ENCODE measurements at regions of chr14 and their contacts with region 1.

Region 1: GRCh38 chr14:60331201-60332045 is 82.4 kb downstream of the PPM1A start:
- DNase-seq: peak; percentile 51 to 86 (median 80)
- ATAC-seq: peak; percentile 80
- H3K4me3 ChIP-seq: peak overlapping the region; percentile 52 to 55
- H3K4me3 Mint-ChIP-seq: peak overlapping the region; percentile 98
- H3K27ac ChIP-seq: peak overlapping the region; percentile 36 to 47
- H3K27ac Mint-ChIP-seq: peak overlapping the region; percentile 94
- H3K4me1 ChIP-seq: peaks cover 9% of the 10 kb centered on the region
- H3K4me1 Mint-ChIP-seq: peaks cover 33% of the 10 kb centered on the region
- H3K27me3 ChIP-seq: no peaks in the 10 kb centered on the region
- H3K27me3 Mint-ChIP-seq: peaks cover 30% of the 10 kb centered on the region
- CTCF ChIP-seq: peak; percentile 87

Region 2: GRCh38 chr14:59483900-59484638 is 847.4 kb before region 1 on chr14 and contains the starts of genes JKAMP and L3HYPDH:
- CTCF ChIA-PET with region 1: no interaction called
- POLR2A ChIA-PET with region 1: no interaction called
- intact Hi-C with region 1: loop called in 1 of 2 experiments (anchors 5 kb)
- DNase-seq: peak; percentile 93 to 99 (median 97)
- ATAC-seq: peak; percentile 95
- H3K4me3 ChIP-seq: peak within 1 kb of the TSS; percentile 94 to 99
- H3K4me3 Mint-ChIP-seq: peak within 1 kb of the TSS; percentile 96
- H3K27ac ChIP-seq: peak within 1 kb of the TSS; percentile 77 to 89
- H3K27ac Mint-ChIP-seq: peak within 1 kb of the TSS; percentile 88
- H3K4me1 ChIP-seq: peaks cover 46% of the 10 kb centered on the region
- H3K4me1 Mint-ChIP-seq: peaks cover 76% of the 10 kb centered on the region
- H3K27me3 ChIP-seq: no peaks in the 10 kb centered on the region
- H3K27me3 Mint-ChIP-seq: no peaks in the 10 kb centered on the region
- CTCF ChIP-seq: no peak
- total RNA-seq, gene JKAMP: 9.1 to 10.5 TPM
- total RNA-seq, gene L3HYPDH: 8.4 to 8.7 TPM

Region 3: DNA sequence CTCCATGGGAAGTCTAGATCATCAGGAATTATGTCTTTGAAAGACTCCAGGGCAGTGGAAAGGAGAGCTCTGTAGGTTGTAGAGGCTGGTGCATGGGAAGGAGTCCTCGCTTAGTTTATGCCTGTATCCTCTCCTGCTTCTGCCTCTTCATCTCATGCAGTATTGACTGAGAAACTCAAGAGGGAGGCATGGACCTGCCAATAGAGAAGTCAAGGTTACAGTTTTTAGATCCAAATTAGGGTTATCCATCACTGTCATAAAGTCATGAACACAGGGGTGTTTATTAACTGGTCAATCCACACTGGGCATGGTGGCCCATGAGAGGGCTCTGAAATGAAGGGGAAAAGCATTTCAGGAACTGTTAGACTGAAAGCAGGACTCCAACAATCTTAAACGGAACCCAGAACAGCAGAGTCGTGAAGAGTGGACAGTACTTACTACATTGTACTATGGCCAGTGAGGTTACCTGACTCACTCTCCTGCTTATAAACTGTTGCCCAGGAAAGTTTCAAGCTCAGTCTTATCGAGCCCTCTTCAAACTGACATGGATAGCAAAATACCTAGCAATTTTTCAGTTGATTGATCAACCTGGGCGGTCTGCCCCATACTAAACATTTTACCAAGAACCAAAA is 136.1 kb before region 1 on chr14:
- CTCF ChIA-PET with region 1: interaction called, 3 read pairs
- POLR2A ChIA-PET with region 1: no interaction called
- intact Hi-C with region 1: loop called (anchors 1 to 5 kb)
- DNase-seq: peak in 2 of 9 experiments; percentile 13 to 33
- ATAC-seq: peak; percentile 52
- H3K4me3 ChIP-seq: no peak overlapping the region
- H3K4me3 Mint-ChIP-seq: no peak overlapping the region
- H3K27ac ChIP-seq: no peak overlapping the region
- H3K27ac Mint-ChIP-seq: no peak overlapping the region
- H3K4me1 ChIP-seq: no peaks in the 10 kb centered on the region
- H3K4me1 Mint-ChIP-seq: no peaks in the 10 kb centered on the region
- H3K27me3 ChIP-seq: peaks cover 0 to 3% of the 10 kb centered on the region in 2 experiments
- H3K27me3 Mint-ChIP-seq: peaks cover 5% of the 10 kb centered on the region
- CTCF ChIP-seq: no peak

Region 4: DNA sequence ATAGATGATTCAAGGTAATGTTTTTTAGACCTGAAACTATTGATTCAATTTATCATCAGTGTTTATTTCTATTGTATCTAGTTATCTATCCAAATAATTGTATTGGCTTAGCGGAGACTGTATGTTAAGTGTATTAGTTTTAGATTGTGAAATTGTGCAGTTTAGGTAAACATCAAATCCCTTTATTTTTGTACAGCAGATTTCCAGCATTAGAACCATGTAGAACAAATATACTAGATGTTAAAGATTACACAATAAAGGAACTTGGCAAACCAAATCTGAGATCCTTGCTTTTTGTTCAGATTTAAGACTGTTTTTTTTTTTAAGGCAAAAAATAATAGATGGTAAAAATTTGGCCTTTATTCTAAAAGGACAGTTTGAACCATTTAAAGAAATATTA is 43.1 kb before region 1 on chr14:
- CTCF ChIA-PET with region 1: interaction called, 4 read pairs
- POLR2A ChIA-PET with region 1: no interaction called
- intact Hi-C with region 1: loop called in 1 of 2 experiments (anchors 5 kb)
- DNase-seq: no peak
- ATAC-seq: no peak
- H3K4me3 ChIP-seq: no peak overlapping the region
- H3K4me3 Mint-ChIP-seq: no peak overlapping the region
- H3K27ac ChIP-seq: no peak overlapping the region
- H3K27ac Mint-ChIP-seq: no peak overlapping the region
- H3K4me1 ChIP-seq: no peaks in the 10 kb centered on the region
- H3K4me1 Mint-ChIP-seq: no peaks in the 10 kb centered on the region
- H3K27me3 ChIP-seq: no peaks in the 10 kb centered on the region
- H3K27me3 Mint-ChIP-seq: no peaks in the 10 kb centered on the region
- CTCF ChIP-seq: no peak

Region 5: DNA sequence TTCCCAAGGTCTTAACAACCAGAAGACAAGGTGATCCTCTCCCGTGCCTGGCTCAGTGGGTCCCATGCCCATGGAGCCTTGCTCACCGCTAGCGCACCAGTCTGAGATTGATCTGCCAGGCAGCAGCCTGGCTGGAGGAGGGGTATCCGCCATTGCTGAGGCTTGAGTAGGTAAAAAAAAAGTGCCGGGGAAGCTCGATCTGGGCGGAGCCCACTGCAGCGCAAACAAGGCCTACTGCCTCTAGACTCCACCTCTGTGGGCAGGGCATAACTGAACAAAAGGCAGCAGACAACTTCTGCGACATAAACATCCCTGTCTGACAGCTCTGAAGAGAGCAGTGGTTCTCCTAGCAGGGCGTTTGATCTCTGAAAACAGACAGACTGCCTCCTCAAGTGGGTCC is 50.5 kb after region 1 on chr14:
- CTCF ChIA-PET with region 1: no interaction called
- POLR2A ChIA-PET with region 1: no interaction called
- intact Hi-C with region 1: no loop called
- DNase-seq: no peak
- ATAC-seq: no peak
- H3K4me3 ChIP-seq: no peak overlapping the region
- H3K4me3 Mint-ChIP-seq: no peak overlapping the region
- H3K27ac ChIP-seq: no peak overlapping the region
- H3K27ac Mint-ChIP-seq: no peak overlapping the region
- H3K4me1 ChIP-seq: no peaks in the 10 kb centered on the region
- H3K4me1 Mint-ChIP-seq: no peaks in the 10 kb centered on the region
- H3K27me3 ChIP-seq: peaks cover 0 to 2% of the 10 kb centered on the region in 2 experiments
- H3K27me3 Mint-ChIP-seq: peaks cover 15% of the 10 kb centered on the region
- CTCF ChIP-seq: no peak

Region 6: GRCh38 chr14:60561845-60562746 is 230.7 kb after region 1 on chr14:
- CTCF ChIA-PET with region 1: interaction called, 6 read pairs
- POLR2A ChIA-PET with region 1: no interaction called
- intact Hi-C with region 1: loop called (anchors 5 kb)
- DNase-seq: peak in 2 of 9 experiments; percentile 26 to 36
- ATAC-seq: no peak
- H3K4me3 ChIP-seq: no peak overlapping the region
- H3K4me3 Mint-ChIP-seq: no peak overlapping the region
- H3K27ac ChIP-seq: no peak overlapping the region
- H3K27ac Mint-ChIP-seq: no peak overlapping the region
- H3K4me1 ChIP-seq: no peaks in the 10 kb centered on the region
- H3K4me1 Mint-ChIP-seq: no peaks in the 10 kb centered on the region
- H3K27me3 ChIP-seq: no peaks in the 10 kb centered on the region
- H3K27me3 Mint-ChIP-seq: peaks cover 3% of the 10 kb centered on the region
- CTCF ChIP-seq: no peak

Region 7: GRCh38 chr14:61252369-61253063 is 921.1 kb after region 1 on chr14:
- CTCF ChIA-PET with region 1: interaction called, 3 read pairs
- POLR2A ChIA-PET with region 1: no interaction called
- intact Hi-C with region 1: loop called in 1 of 2 experiments (anchors 5 kb)
- DNase-seq: peak; percentile 13 to 76 (median 52)
- ATAC-seq: peak; percentile 85
- H3K4me3 ChIP-seq: no peak overlapping the region
- H3K4me3 Mint-ChIP-seq: no peak overlapping the region
- H3K27ac ChIP-seq: no peak overlapping the region
- H3K27ac Mint-ChIP-seq: no peak overlapping the region
- H3K4me1 ChIP-seq: no peaks in the 10 kb centered on the region
- H3K4me1 Mint-ChIP-seq: peaks cover 3% of the 10 kb centered on the region
- H3K27me3 ChIP-seq: no peaks in the 10 kb centered on the region
- H3K27me3 Mint-ChIP-seq: peaks cover 7% of the 10 kb centered on the region
- CTCF ChIP-seq: peak; percentile 84

Measured in CD8-positive, alpha-beta T cell (primary cell).